ENCODE measurements at regions of chr14 and their contacts with region 1.

Region 1: DNA sequence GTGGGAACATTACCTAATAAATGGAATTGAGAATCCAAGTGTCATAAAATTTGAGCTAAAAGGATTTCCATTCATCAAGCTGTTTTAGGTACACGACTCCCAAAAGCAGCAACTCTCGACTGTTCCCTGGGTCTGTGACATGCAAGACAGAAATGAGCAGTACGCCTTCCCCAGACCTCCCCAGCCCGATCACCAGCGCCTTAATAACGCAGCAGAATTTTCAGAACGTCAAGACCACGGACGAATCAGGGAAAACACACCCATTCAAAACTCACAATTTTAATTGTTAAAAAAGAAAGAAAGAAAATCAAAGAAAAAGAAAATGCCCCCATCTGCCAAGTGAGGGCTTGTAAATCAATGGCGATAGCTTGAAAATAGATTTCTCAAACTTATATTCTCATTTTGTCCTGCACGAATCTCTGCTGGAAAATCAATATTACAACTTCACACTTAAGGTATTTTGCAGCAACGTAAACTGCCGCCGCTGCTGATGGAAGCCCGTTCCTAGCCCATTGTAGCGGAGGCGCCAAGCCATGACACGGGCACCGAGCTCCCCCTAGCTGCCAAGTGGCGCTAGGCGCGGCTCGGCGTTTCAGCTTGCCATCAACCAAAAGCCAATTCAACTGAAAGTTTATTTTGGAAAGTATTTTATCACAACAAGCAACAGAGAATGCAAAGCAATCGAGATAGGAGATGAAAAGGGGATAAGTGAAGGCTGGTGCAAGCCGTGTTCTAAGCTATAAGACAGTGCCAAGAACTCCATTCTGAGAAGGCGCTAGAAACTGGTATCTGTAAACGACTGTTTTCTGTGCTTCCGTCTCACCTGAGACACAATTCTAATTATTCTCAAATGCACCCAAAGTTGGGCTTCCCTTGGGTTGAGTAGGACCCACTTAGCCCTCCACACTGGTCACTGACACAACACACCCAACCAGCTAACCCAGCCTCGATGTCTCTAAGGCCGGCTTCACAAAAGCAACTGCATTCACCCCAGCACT is 5.5 kb downstream of the BCL11B start:
- DNase-seq: peak; percentile 87 to 90 (median 88)
- H3K4me3 ChIP-seq: peak overlapping the region; percentile 91 to 99
- H3K4me3 Mint-ChIP-seq: peak overlapping the region; percentile 94 to 100 (median 98)
- H3K27ac ChIP-seq: peak overlapping the region; percentile 98
- H3K27ac Mint-ChIP-seq: peak overlapping the region; percentile 99 to 100 (median 100)
- H3K4me1 ChIP-seq: peaks cover 54% of the 10 kb centered on the region
- H3K4me1 Mint-ChIP-seq: peaks cover 42 to 72% (median 55%) of the 10 kb centered on the region in 4 donors
- H3K27me3 ChIP-seq: no peaks in the 10 kb centered on the region
- H3K27me3 Mint-ChIP-seq: no peaks in the 10 kb centered on the region

Region 2: GRCh38 chr14:98173305-98173704 is 1093.2 kb before region 1 on chr14:
- CTCF ChIA-PET with region 1: interaction called, 14 read pairs
- POLR2A ChIA-PET with region 1: interaction called, 21 read pairs
- intact Hi-C with region 1: no loop called
- DNase-seq: peak; percentile 74 to 80 (median 77)
- H3K4me3 ChIP-seq: peak overlapping the region in 1 of 2 donors; percentile 33
- H3K4me3 Mint-ChIP-seq: peak overlapping the region; percentile 75 to 87 (median 81)
- H3K27ac ChIP-seq: peak overlapping the region; percentile 64
- H3K27ac Mint-ChIP-seq: peak overlapping the region; percentile 86 to 99 (median 94)
- H3K4me1 ChIP-seq: peaks cover 100% of the 10 kb centered on the region
- H3K4me1 Mint-ChIP-seq: peaks cover 87 to 100% (median 93%) of the 10 kb centered on the region in 4 donors
- H3K27me3 ChIP-seq: no peaks in the 10 kb centered on the region
- H3K27me3 Mint-ChIP-seq: no peaks in the 10 kb centered on the region

Region 3: DNA sequence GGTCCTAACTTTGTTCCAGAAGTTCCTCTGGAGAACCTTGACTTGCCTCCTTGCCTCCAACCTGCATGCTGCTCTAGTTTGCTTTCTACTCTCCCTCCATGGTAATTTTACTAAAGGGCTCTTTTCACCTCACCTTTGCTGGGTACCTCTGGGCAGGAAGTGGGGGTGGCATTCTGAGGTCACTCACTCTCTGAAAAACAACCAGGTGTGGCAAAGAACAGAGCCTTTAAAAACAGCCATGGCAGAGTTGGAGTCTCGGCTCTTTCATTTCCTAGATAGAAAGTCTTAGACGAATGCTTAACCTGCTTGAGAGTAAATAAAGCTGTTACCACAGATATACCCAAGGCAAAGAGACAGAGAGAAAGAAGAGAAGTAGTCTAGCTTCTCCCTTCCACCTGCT is 822.4 kb before region 1 on chr14:
- CTCF ChIA-PET with region 1: interaction called, 3 read pairs
- POLR2A ChIA-PET with region 1: interaction called, 8 read pairs
- intact Hi-C with region 1: loop called (anchors 2 kb)
- DNase-seq: peak; percentile 70 to 77 (median 72)
- H3K4me3 ChIP-seq: peak overlapping the region; percentile 5 to 10
- H3K4me3 Mint-ChIP-seq: peak overlapping the region; percentile 60 to 85 (median 80)
- H3K27ac ChIP-seq: peak overlapping the region; percentile 17
- H3K27ac Mint-ChIP-seq: peak overlapping the region; percentile 93 to 99 (median 97)
- H3K4me1 ChIP-seq: peaks cover 37% of the 10 kb centered on the region
- H3K4me1 Mint-ChIP-seq: peaks cover 22 to 48% (median 35%) of the 10 kb centered on the region in 4 donors
- H3K27me3 ChIP-seq: no peaks in the 10 kb centered on the region
- H3K27me3 Mint-ChIP-seq: no peaks in the 10 kb centered on the region

Region 4: DNA sequence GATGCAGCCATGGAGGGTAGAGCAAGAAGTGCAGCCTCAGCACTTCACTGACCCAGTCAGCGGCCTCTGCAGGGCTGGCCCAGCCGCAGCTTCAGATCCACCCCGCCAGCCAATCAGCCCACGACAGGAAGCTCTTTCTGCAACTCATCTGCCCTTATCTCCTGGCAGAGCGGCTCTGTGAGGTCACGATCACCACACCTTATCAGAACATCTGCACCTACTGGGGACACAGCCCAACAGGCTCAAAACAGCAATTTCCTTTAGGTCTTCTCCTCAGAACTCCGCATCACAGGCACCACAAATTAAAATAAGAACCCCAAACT is 281.8 kb before region 1 on chr14:
- CTCF ChIA-PET with region 1: interaction called, 4 read pairs
- POLR2A ChIA-PET with region 1: interaction called, 19 read pairs
- intact Hi-C with region 1: loop called (anchors 2 kb)
- DNase-seq: peak; percentile 81 to 87 (median 87)
- H3K4me3 ChIP-seq: peak overlapping the region in 1 of 2 donors; percentile 16
- H3K4me3 Mint-ChIP-seq: peak overlapping the region; percentile 42 to 93 (median 81)
- H3K27ac ChIP-seq: peak overlapping the region; percentile 47
- H3K27ac Mint-ChIP-seq: peak overlapping the region; percentile 92 to 99 (median 97)
- H3K4me1 ChIP-seq: peaks cover 37% of the 10 kb centered on the region
- H3K4me1 Mint-ChIP-seq: peaks cover 32 to 69% (median 53%) of the 10 kb centered on the region in 4 donors
- H3K27me3 ChIP-seq: no peaks in the 10 kb centered on the region
- H3K27me3 Mint-ChIP-seq: no peaks in the 10 kb centered on the region

Region 5: GRCh38 chr14:99038431-99038820 is 228.1 kb before region 1 on chr14:
- CTCF ChIA-PET with region 1: no interaction called
- POLR2A ChIA-PET with region 1: no interaction called
- intact Hi-C with region 1: no loop called
- DNase-seq: no peak
- H3K4me3 ChIP-seq: no peak overlapping the region
- H3K4me3 Mint-ChIP-seq: no peak overlapping the region
- H3K27ac ChIP-seq: no peak overlapping the region
- H3K27ac Mint-ChIP-seq: no peak overlapping the region
- H3K4me1 ChIP-seq: no peaks in the 10 kb centered on the region
- H3K4me1 Mint-ChIP-seq: peaks cover 0 to 4% (median 0%) of the 10 kb centered on the region in 4 donors
- H3K27me3 ChIP-seq: no peaks in the 10 kb centered on the region
- H3K27me3 Mint-ChIP-seq: no peaks in the 10 kb centered on the region

Region 6: DNA sequence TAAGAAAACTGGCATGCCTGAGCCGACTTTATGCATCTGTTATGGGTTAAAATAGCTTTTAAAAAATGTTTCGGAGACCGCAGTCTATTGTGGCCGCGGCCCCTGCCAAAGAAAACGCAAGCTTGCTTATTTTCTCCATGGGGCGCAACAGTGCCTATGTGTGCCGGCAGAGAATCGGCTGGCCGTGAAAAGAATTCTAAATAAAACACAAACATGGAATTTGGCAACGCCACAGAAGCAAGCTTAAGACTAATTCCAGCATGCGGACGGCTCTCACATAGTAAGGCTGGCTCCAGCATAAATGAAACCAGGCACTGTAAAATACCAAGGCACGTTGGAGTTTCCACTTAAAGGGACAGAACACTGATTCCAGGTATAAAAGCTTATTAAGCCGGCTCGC is 51.2 kb before region 1 on chr14:
- CTCF ChIA-PET with region 1: interaction called, 23 read pairs
- POLR2A ChIA-PET with region 1: interaction called, 6,015 read pairs
- intact Hi-C with region 1: no loop called
- DNase-seq: no peak
- H3K4me3 ChIP-seq: peak overlapping the region in 1 of 2 donors; percentile 50
- H3K4me3 Mint-ChIP-seq: peak overlapping the region; percentile 82 to 90 (median 86)
- H3K27ac ChIP-seq: peak overlapping the region; percentile 53
- H3K27ac Mint-ChIP-seq: peak overlapping the region; percentile 86 to 95 (median 94)
- H3K4me1 ChIP-seq: peaks cover 97% of the 10 kb centered on the region
- H3K4me1 Mint-ChIP-seq: peaks cover 80 to 100% (median 89%) of the 10 kb centered on the region in 4 donors
- H3K27me3 ChIP-seq: no peaks in the 10 kb centered on the region
- H3K27me3 Mint-ChIP-seq: no peaks in the 10 kb centered on the region

Region 7: GRCh38 chr14:99235582-99236320 is 30.7 kb before region 1 on chr14:
- CTCF ChIA-PET with region 1: interaction called, 270 read pairs
- POLR2A ChIA-PET with region 1: interaction called, 6,015 read pairs
- intact Hi-C with region 1: loop called (anchors 1 kb)
- DNase-seq: peak in 4 of 5 donors; percentile 46 to 60 (median 51)
- H3K4me3 ChIP-seq: peak overlapping the region; percentile 14 to 53
- H3K4me3 Mint-ChIP-seq: peak overlapping the region; percentile 83 to 99 (median 90)
- H3K27ac ChIP-seq: peak overlapping the region; percentile 98
- H3K27ac Mint-ChIP-seq: peak overlapping the region; percentile 98 to 99 (median 99)
- H3K4me1 ChIP-seq: peaks cover 100% of the 10 kb centered on the region
- H3K4me1 Mint-ChIP-seq: peaks cover 80 to 98% (median 90%) of the 10 kb centered on the region in 4 donors
- H3K27me3 ChIP-seq: no peaks in the 10 kb centered on the region
- H3K27me3 Mint-ChIP-seq: no peaks in the 10 kb centered on the region

Measured in CD4-positive, alpha-beta memory T cell (primary cell).